ENCODE measurements at regions of chr4 and their contacts with region 1.

Region 1: GRCh38 chr4:40369437-40370274 is 34.5 kb downstream of the CHRNA9 start:
- DNase-seq: no peak
- ATAC-seq: no peak

Region 2: DNA sequence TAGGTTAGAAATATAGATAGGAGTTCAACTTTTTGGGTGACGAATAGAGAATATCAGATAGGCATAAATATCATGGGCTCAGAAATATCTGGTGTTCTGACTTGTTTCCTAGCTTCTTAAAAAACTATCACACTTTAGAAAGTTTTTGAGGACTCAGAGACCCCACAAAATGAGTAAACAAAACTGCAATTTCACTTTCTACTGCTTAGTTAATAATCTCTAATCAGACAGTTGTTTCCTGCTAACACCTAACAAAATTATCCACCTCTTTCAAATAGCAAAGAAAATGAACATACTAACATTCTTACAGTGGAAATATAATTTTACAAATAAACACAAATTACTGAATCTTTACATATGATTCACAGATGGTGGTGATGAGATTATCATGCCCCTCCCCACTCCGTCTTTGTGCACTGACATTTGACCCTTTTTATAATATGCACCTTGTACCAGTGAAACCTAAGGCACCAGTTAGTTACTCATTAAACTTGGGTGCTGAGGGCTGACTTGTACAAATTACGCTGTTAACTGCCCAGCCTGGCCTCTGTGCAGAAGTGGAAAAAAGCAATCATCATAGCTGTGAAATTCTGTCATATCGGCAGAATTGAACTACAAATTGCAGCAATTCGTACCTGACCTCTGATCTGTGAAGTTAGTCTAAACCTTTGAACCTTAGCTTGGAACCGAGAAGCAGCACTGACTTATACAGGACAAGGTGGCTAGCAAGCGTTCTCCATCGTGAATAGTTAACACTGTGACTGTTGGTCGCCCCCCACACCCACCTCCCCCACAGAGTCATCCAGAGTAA is 104.1 kb after region 1 on chr4:
- intact Hi-C with region 1: loop called (anchors 5 kb)
- DNase-seq: no peak
- ATAC-seq: no peak